ENCODE measurements at regions of chr6 and their contacts with region 1.

Region 1: GRCh38 chr6:89080542-89081422 is at the start of gene PNRC1:
- DNase-seq: peak; percentile 93
- H3K4me3 ChIP-seq: peak within 1 kb of the TSS; percentile 93 to 95
- H3K27ac ChIP-seq: peak within 1 kb of the TSS; percentile 94 to 97
- H3K4me1 ChIP-seq: peaks cover 4 to 18% of the 10 kb centered on the region in 2 experiments; a peak in 2 of 4 replicates
- H3K27me3 ChIP-seq: no peaks in the 10 kb centered on the region
- CTCF ChIP-seq: no peak
- EP300 ChIP-seq: 0 out of 4 replicates have a peak, but pooled peaks of 1 of the 2 experiments have one; percentile 25
- RAD21 ChIP-seq: no peak
- polyA plus RNA-seq, gene PNRC1: 6.7 and 7.8 TPM in 2 replicates

Region 2: DNA sequence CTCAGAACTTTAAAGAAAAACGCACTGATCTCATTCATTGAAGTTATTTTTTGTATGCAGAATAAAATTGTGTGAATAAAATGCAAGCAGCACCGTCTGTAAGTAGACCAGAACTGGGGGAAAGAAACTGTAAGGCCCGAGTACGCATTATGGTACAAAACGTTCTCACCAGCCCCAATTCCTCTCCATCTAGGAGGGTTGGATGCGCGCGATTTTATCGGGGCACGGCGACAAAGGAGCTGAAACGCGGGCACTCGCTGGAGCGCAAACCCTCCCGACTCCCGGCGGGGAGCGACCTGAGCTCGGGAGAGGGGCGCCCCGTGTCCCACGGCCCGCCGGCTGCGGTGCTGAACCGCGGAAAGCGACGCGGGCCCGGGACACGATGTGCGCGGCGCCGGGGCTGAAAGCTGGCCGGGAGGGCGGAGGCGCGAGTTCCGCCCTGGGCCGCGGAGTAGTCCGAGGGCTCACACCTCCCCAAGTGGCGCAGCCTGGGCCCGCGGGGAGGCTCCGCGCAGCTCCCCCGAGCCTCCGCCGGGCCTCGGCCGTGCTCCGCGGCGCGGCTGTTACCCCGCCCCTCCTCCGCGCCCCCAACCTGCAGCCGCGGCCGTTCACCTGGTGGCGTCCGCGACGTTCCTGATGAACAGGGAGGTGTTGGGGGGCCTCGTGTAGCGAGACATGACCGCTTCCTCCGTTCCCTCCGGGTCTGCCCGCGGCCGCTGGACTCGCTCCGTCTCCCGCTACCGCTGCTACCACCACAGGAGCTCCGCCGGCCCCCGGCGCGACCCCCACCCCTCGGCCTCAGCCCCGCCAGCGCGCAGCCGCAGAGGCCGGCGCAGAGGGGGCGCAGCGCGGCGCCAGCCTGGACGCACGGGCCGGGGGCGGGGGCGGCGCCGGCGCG is 36.7 kb after region 1 on chr6 and contains the start of gene SRSF12:
- CTCF ChIA-PET with region 1: interaction called, 5 read pairs
- POLR2A ChIA-PET with region 1: interaction called, 11 read pairs
- DNase-seq: peak; percentile 98
- H3K4me3 ChIP-seq: peak within 1 kb of the TSS; percentile 63 to 71
- H3K27ac ChIP-seq: peak within 1 kb of the TSS in 1 of 2 experiments; percentile 37; a peak in 1 of 4 replicates
- H3K4me1 ChIP-seq: peaks cover 0 to 5% of the 10 kb centered on the region in 2 experiments; a peak in 1 of 4 replicates
- H3K27me3 ChIP-seq: no peaks in the 10 kb centered on the region
- CTCF ChIP-seq: no peak
- EP300 ChIP-seq: no peak
- RAD21 ChIP-seq: no peak
- polyA plus RNA-seq, gene SRSF12: 1.1 TPM in 2 replicates